H1 (cell line): ENCODE measurements at regions of chr1 and their contacts with region 1.

Region 1: DNA sequence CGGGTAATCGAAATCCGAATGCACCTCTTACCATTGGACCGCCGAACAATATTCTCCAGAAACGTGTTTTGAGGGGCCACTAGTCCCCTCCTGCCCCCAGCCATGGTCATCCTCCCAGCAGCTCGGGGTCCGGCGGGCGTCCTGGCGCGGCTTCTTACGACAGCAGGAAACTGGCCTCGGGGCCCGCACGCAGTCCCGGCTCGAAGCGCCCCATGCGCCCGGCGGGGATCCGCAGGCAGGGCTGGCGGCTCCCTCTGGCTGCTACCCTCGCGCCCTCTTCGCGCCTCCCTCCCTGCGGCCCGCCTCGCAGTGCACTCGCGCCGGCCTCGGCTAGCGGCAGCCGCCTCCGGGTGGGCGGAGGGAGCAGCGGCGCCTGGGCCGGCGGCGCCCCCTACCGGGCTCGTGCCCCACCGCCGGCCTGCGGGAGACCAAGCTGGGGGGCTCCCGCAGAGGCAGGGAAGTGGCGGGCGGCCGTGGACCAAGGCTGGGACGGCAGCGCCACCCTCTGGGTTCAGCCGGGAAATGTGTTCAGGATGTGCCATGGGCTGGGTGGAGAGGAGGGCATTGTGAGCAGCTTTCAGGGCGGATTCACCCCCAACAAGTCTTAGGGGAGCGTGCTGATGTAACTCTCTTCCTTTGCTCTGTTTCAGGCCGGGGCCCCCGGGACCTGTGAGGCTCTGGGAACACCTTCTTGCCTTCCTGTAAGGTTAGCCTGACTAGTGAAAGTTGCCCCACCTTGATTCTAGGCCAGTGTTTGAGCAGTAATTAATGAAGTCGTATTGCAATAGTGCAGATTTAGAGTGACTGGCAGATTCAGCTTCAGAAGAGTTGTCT is at the start of gene KCNH1:
- DNase-seq: peak; percentile 75 to 96
- H3K4me3 ChIP-seq: peak within 1 kb of the TSS; percentile 48 to 79 (median 64)
- H3K27ac ChIP-seq: no peak within 1 kb of the TSS
- H3K4me1 ChIP-seq: peaks cover 2 to 10% (median 3%) of the 10 kb centered on the region in 4 experiments; a peak in 4 of 7 replicates
- H3K27me3 ChIP-seq: peaks cover 8 to 18% (median 14%) of the 10 kb centered on the region in 4 experiments
- CTCF ChIP-seq: peak; percentile 89 to 98 (median 95)
- EP300 ChIP-seq: peak in 1 of 2 experiments; percentile 75; a peak in 1 of 3 replicates
- POLR2A ChIP-seq: no peak
- RAD21 ChIP-seq: peak; percentile 91 to 96
- total RNA-seq, gene KCNH1: 0.34 and 0.38 TPM in 2 replicates

Region 2: DNA sequence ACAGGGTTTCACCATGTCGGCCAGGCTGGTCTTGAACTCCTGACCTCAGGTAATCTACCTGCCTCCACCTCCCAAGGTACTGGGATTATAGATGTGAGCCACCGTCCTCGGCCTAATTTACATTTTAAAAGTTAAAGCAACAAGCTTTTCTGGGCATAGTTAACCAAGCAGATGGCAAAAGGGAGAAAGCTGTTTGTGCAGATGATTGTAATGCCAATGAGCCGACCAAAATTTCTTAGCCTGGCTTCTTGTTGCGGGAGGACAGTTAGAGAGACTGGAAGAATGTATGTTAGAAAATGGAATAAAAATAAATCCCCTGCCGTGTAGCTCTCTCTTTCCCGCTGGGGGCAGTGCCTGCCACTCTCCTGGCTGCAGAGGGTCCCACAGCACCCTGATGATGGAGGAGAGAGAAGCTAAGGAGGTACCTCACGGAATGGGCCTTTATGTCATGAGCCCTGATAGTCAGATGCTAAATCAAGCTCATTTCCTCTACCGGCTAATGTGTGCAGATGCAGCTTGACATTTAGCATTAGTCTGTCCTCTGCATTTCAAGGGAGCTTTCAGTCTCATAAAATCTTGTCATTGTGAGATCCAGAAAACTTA is 718.1 kb before region 1 on chr1:
- CTCF ChIA-PET with region 1: interaction called, 33 read pairs
- POLR2A ChIA-PET with region 1: no interaction called
- DNase-seq: no peak
- H3K4me3 ChIP-seq: no peak overlapping the region
- H3K27ac ChIP-seq: no peak overlapping the region
- H3K4me1 ChIP-seq: peaks cover 2 to 6% (median 3%) of the 10 kb centered on the region in 4 experiments; a peak in 3 of 7 replicates
- H3K27me3 ChIP-seq: no peaks in the 10 kb centered on the region
- CTCF ChIP-seq: peak in 2 of 3 experiments; percentile 12 to 30; a peak in 2 of 4 replicates
- EP300 ChIP-seq: no peak
- POLR2A ChIP-seq: no peak
- RAD21 ChIP-seq: peak in 1 of 2 experiments; percentile 35; a peak in 2 of 4 replicates

Region 3: DNA sequence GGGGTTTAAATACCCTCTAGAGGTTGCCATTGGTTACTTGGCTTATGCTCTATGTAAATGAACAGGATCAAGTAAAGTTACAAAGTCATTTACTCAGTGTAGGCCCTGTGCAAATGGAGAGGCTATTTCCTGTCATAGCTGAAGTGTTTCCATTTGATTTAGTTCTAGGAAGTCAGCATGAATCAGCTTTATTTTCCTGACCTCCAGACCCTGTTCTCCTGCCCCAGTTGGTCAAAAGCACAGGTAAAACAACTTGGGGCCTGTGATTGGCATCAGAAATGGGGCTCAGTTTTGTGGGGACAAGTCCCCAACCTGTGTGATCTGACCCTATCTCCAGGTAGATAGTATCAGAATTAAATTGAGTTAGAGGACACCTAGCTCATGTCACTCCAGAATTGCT is 565.4 kb before region 1 on chr1:
- CTCF ChIA-PET with region 1: interaction called, 11 read pairs
- POLR2A ChIA-PET with region 1: no interaction called
- DNase-seq: no peak
- H3K4me3 ChIP-seq: no peak overlapping the region
- H3K27ac ChIP-seq: no peak overlapping the region
- H3K4me1 ChIP-seq: no peaks in the 10 kb centered on the region
- H3K27me3 ChIP-seq: no peaks in the 10 kb centered on the region
- CTCF ChIP-seq: no peak
- EP300 ChIP-seq: no peak
- POLR2A ChIP-seq: no peak
- RAD21 ChIP-seq: no peak

Region 4: DNA sequence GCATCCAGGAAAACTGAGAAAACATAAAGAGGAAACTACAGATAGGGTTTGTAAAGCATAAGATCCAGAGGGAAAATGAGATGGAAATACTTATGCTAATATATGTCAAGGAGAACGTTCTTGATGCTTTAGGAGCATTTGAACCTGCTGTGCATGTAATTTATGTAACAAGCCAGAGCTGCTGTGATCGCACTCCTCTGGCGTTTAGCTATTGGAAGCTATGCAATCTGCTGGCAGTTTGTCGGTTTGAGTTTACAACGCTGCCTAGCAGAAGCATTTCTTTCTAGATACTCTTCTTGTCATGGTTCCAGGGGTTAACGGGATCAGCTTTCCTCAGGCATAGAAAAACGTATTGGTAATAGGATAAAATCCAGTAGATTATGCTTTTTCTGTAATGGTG is 182.8 kb before region 1 on chr1:
- CTCF ChIA-PET with region 1: interaction called, 27 read pairs
- POLR2A ChIA-PET with region 1: no interaction called
- DNase-seq: no peak
- H3K4me3 ChIP-seq: no peak overlapping the region
- H3K27ac ChIP-seq: no peak overlapping the region
- H3K4me1 ChIP-seq: no peaks in the 10 kb centered on the region
- H3K27me3 ChIP-seq: no peaks in the 10 kb centered on the region
- CTCF ChIP-seq: no peak
- EP300 ChIP-seq: no peak
- POLR2A ChIP-seq: no peak
- RAD21 ChIP-seq: no peak

Region 5: DNA sequence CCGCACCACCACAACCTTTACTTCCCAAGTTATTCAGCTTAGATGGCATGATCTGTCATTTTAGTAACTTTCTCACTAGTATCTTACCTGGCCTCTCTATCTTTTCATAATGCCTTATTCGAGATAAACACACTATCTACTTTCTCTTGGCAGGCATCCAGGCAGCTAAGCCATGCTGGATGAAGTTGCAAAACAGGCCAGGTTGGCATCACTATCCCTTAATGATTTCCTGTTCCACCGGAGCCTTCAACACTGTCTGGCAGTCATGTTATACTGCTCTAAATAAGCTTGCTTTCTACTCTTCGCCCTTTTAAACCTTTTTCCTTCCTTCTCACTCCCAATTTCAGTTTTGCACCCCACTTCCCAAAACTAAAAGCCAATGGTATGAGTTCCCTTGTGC is 11.9 kb after region 1 on chr1:
- CTCF ChIA-PET with region 1: interaction called, 13 read pairs
- POLR2A ChIA-PET with region 1: interaction called, 3 read pairs
- DNase-seq: no peak
- H3K4me3 ChIP-seq: no peak overlapping the region
- H3K27ac ChIP-seq: no peak overlapping the region
- H3K4me1 ChIP-seq: peaks cover 0 to 5% (median 0%) of the 10 kb centered on the region in 4 experiments; a peak in 1 of 7 replicates
- H3K27me3 ChIP-seq: no peaks in the 10 kb centered on the region
- CTCF ChIP-seq: no peak
- EP300 ChIP-seq: no peak
- POLR2A ChIP-seq: no peak
- RAD21 ChIP-seq: no peak

Region 6: DNA sequence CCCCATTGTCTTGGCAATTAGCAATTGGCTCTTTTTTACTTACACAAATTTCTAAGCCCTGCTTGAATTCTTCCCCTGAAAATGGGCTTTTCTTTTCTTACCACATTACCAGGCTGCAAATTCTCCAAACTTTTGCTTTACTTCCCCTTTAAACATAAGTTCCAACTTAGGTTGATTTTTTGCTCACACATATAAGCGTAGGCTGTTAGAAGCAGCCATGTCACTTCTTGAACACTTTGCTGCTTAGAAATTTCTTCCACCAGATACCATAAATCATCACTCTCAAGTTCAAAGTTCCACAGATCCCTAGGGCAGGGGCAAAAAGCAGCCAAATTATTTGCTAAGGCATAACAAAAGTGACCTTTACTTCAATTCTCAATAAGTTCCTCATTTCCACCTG is 35.3 kb after region 1 on chr1:
- CTCF ChIA-PET with region 1: no interaction called
- POLR2A ChIA-PET with region 1: no interaction called
- DNase-seq: no peak
- H3K4me3 ChIP-seq: no peak overlapping the region
- H3K27ac ChIP-seq: no peak overlapping the region
- H3K4me1 ChIP-seq: no peaks in the 10 kb centered on the region
- H3K27me3 ChIP-seq: no peaks in the 10 kb centered on the region
- CTCF ChIP-seq: no peak
- EP300 ChIP-seq: no peak
- POLR2A ChIP-seq: no peak
- RAD21 ChIP-seq: no peak

Region 7: DNA sequence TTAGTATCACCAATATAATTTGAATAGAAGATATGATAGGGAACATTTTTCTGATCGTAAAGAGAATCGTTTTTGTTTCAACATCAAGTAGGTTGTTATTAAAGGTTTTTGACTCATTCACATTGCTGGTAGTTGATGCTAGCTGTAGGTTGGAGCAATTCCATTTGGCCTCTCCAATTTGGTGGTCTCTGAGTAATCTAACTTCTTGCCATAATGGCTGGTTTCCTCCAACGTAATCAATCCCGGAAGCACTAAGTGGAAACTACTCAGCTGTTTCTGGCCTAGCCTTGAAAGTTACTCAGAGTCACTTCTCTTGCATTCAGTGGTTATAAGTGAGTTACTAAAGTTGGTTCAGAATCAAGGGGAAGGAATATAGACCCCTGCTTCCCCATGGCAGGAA is 151.1 kb after region 1 on chr1:
- CTCF ChIA-PET with region 1: no interaction called
- POLR2A ChIA-PET with region 1: no interaction called
- DNase-seq: no peak
- H3K4me3 ChIP-seq: no peak overlapping the region
- H3K27ac ChIP-seq: no peak overlapping the region
- H3K4me1 ChIP-seq: no peaks in the 10 kb centered on the region
- H3K27me3 ChIP-seq: no peaks in the 10 kb centered on the region
- CTCF ChIP-seq: no peak
- EP300 ChIP-seq: no peak
- POLR2A ChIP-seq: no peak
- RAD21 ChIP-seq: no peak